ENCODE measurements at regions of chr3 and their contacts with region 1.

Region 1: GRCh38 chr3:14253022-14253706 is 74.5 kb downstream of the LSM3 start:
- DNase-seq: peak; percentile 62 to 73
- H3K4me3 ChIP-seq: no peak overlapping the region
- H3K27ac ChIP-seq: no peak overlapping the region
- H3K4me1 ChIP-seq: peaks cover 37% of the 10 kb centered on the region
- H3K27me3 ChIP-seq: no peaks in the 10 kb centered on the region
- CTCF ChIP-seq: no peak

Region 2: DNA sequence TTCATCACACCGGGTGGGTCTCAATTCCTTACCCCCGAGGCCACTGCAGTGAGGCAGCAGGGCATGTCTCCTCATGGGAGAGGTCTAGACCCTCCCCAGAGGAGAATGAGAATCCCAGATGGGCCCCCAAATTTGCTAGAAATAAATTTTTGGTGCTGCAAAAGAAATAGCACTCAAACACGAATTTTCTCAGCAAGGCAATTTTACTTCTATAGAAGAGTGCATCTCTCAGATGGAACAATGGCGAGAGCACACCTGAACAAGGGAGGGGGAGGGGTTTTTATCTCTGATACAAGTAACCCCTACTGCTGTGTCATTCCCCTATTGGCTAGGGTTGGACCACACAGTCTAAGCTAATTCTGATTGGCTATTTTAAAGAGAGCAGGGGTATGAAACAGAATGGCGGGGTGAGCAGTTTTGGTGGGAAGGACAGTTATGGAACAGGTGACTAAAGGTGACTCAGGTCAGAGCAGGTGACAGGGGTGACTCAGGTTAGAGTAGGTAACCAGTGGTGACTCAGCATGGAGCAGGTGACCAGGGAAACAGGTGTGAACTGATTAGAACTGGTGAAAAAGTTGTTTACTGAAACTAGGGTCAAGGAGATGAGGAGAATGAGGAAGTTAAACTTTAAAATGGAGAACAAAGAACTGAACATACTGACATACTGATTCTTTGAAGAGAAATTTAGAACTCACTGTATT is 280.3 kb before region 1 on chr3:
- CTCF ChIA-PET with region 1: no interaction called
- POLR2A ChIA-PET with region 1: no interaction called
- intact Hi-C with region 1: no loop called
- DNase-seq: no peak
- H3K4me3 ChIP-seq: no peak overlapping the region
- H3K27ac ChIP-seq: no peak overlapping the region
- H3K4me1 ChIP-seq: no peaks in the 10 kb centered on the region
- H3K27me3 ChIP-seq: 0 out of 2 replicates have a peak, but pooled peaks cover 7% of the 10 kb centered on the region
- CTCF ChIP-seq: no peak

Region 3: DNA sequence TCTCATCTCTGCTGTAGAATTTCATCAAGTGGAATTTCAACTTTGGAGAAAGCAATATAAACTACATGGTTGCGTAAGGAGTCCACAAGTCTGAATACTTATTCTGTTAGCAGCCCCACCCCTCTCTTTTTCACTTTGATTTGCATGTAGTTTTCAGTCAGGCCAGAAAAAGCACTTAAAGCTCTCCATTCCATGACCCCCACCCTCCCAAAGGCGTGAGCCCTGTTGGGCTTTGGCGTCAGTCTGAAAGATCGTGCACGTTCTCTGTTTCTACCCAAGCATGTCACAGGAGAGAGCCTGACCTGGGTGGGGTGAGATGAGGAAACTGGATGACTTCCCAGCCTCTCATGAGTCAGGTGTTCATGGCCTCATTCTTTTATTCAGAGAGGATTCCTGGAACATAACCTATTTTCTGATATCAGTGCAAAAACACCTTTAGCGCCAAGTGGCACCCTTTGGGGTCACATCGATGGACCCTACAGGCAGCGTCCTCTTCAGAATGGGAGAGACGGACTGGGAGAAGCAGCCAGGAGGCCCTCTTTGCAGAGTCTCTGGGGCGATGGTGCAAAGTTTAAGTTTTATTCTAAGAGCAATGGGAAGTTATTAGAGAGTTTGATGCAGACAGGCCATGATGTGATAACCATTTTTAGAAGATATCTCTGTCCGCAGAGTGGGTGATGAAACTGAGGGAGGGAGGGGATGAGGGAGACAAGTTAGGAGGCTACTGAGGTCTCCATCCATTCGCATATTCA is 18.7 kb before region 1 on chr3:
- CTCF ChIA-PET with region 1: no interaction called
- POLR2A ChIA-PET with region 1: no interaction called
- intact Hi-C with region 1: loop called (anchors 2 kb)
- DNase-seq: peak; percentile 82 to 86
- H3K4me3 ChIP-seq: peak overlapping the region; percentile 2; the same call in 1 of the 2 replicates
- H3K27ac ChIP-seq: peak overlapping the region; percentile 90
- H3K4me1 ChIP-seq: peaks cover 54% of the 10 kb centered on the region
- H3K27me3 ChIP-seq: no peaks in the 10 kb centered on the region
- CTCF ChIP-seq: no peak

Measured in PC-9 (cell line).